Activated naive CD4-positive, alpha-beta T cell treated with anti-CD3 and anti-CD28 coated beads for 36 hours (primary cell): ENCODE measurements at regions of chr15 and their contacts with region 1.

Region 1: DNA sequence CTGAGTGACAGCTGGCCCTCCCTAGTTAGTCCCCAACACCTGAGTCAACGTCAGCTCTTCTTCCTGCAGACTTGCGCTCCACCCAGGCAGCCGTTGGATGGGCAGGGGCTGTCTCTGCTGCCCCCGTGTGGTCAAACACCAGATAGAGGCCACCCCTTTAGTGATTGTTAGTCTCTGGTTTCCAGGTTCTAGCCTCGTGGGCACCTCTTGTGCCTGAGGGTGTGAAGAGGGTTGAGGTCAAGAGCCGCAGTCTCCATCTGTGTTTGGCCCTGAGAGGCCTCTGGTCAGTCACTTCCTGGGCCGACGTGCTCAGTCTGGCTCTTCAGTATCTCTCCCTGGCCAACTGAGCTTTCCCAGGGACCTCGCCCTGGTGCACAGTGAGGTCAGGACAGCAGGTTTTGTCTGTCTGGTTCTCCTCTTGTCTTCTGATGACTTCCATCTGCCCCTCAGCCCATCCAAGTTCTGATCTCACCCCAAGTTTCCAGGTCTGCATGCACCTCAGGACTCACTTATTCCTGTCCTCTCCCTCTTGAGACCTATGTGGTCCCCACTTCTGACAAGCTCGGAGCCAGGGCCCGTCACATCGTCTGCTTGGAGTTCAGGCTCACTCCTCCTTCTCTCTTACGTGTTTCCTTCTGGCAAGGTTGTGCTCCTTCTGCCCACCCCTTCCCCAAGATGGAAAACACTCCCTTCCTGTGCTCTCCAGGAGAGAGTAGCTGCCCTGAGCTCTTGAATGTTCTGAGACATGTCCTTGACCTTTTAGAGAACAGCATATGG is 20.9 kb downstream of the CD276 start:
- DNase-seq: peak; percentile 82
- H3K4me3 Mint-ChIP-seq: no peak overlapping the region
- H3K27ac Mint-ChIP-seq: no peak overlapping the region
- H3K4me1 Mint-ChIP-seq: peaks cover 2% of the 10 kb centered on the region
- H3K27me3 Mint-ChIP-seq: peaks cover 11% of the 10 kb centered on the region

Region 2: DNA sequence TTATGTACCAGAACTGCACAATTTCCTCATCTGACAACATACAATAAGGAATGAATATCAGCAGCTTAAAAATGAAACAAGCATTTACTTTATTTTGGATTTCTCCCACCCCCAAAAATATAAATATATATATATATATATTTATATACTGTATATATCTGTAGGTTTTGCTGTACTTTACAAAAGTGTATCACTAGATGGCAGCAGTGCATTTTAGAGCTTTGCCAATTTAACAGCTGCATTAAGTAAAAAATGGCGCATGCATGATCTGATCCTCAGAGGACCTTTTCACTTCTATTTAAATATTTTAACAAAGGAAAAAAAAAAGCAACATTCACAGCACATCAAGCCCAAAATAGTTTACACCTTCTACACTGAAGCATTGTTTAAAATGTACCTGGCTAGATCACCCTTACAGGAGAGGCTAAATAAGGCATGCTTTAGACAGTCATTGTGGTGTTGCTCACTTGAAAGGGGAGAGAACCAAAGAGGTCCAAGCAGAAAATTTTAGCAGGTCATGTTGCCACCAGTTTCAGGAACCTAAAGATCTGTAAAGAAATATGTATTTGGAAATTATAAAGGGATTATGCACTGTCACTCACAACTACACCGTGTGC is 144.4 kb before region 1 on chr15:
- CTCF ChIA-PET with region 1: interaction called, 17 read pairs
- intact Hi-C with region 1: loop called (anchors 1 kb)
- DNase-seq: peak; percentile 21
- H3K4me3 Mint-ChIP-seq: no peak overlapping the region
- H3K27ac Mint-ChIP-seq: no peak overlapping the region
- H3K4me1 Mint-ChIP-seq: no peaks in the 10 kb centered on the region
- H3K27me3 Mint-ChIP-seq: no peaks in the 10 kb centered on the region

Region 3: DNA sequence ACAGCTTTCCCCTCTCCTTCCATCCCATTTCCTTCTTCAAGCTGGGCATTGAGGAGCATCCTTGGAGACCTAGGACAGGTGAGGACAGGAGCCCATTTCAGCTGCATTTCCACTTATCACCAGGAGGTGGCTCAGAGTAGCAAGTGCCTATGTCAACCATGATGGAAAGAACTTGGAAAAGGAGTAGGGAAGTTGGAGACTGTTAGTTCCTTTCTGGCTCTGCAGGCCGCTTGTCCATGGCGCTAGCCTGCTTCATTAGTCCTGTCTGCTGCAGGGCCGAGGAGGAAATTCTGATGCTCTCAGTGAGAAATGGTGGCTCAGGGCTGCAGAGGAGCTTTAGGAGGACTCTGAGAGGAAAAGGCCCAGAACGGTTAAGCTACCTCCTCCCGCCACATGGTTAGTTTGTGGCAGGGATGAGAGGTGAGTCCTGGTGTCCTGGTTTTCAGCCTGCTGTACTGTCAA is 27.9 kb before region 1 on chr15:
- CTCF ChIA-PET with region 1: interaction called, 113 read pairs
- intact Hi-C with region 1: loop called (anchors 1 kb)
- DNase-seq: peak; percentile 68
- H3K4me3 Mint-ChIP-seq: no peak overlapping the region
- H3K27ac Mint-ChIP-seq: no peak overlapping the region
- H3K4me1 Mint-ChIP-seq: peaks cover 6% of the 10 kb centered on the region
- H3K27me3 Mint-ChIP-seq: peaks cover 14% of the 10 kb centered on the region

Region 4: DNA sequence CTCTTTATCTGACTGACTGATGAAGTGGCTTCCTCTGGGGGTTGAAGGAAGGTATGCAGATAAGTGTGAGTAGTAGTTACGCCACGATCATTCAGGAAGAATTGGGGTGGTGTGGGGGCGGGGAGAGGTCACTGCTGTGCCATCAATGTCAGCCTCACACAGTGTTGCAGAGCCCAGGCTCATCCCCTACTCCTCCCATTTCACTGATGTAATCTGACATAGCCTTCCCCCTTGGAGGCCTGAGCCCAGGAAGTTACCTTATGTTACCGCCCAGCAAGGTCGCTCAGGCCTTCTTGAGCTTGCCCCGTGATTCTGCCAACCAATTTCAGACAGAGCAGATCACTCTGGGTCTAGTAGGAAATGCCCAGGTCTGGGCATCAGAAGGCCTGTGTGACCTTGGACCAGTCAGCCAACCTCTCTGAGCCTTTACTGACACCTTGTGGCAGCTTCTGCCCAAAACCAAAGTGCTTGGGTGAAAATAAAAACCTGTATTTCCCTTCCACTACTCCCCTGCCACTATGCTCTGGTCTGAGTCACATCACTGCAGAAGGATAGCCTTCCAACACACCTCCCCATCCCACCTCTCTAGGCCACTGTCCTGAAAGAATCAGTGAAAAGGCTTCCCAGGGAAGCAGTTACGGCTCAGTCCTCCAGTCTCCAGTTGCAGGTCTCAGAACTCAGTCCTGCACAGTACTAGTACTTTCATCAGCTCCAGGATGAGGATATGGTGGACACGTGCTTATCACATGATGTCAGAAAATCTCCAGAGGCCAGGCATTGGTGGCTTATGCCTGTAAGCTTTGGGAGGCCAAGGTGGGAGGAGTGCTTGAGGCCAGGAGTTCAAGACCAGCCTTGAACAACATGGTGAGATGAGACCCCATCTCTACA is 76.2 kb after region 1 on chr15:
- CTCF ChIA-PET with region 1: interaction called, 3 read pairs
- intact Hi-C with region 1: loop called (anchors 2 kb)
- DNase-seq: peak; percentile 34
- H3K4me3 Mint-ChIP-seq: no peak overlapping the region
- H3K27ac Mint-ChIP-seq: no peak overlapping the region
- H3K4me1 Mint-ChIP-seq: no peaks in the 10 kb centered on the region
- H3K27me3 Mint-ChIP-seq: no peaks in the 10 kb centered on the region